Ovary (tissue), 10 donors: ENCODE measurements at regions of chr15 and their contacts with region 1.

Region 1: DNA sequence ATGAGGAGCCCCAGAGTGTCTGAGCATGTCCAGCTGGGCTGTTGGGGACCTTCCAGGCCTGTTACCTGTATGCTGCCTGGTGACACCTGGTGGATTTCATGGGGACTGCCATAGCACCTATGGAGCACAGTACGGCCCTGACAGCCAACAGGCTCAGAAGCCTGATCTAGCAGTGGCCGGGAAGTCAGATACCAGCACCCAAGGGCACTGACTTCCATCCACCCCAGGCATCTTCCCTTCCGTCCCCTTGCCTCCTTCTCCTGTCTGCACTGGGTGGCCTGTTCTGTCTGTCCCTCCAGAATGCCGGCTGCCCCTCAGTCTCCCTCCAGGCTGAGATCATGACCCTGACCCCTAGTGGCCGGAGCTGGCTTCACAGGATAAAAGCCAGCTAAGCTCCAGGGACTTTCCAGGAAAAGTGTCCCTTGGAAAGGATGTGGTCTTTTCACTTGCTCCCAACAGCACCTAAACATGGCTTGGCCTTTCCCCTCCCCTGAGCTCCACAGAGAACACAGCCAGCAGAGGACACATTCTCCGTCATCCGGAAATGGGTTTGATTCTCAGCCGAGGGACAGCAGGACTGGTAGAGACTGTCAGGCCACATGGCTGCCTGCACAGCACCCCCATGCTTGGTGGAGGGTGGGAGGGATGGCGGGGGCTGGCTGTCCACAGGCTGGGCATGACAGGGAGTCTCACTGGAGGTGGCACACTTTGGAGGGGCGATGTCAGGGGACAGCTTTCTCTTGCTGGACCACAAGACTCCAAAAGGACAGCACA is 9.5 kb downstream of the RPS17 start:
- DNase-seq: peak; percentile 37 to 66 (median 60)
- H3K4me3 ChIP-seq: no peak overlapping the region
- H3K27ac ChIP-seq: no peak overlapping the region
- H3K4me1 ChIP-seq: no peaks in the 10 kb centered on the region
- H3K27me3 ChIP-seq: no peaks in the 10 kb centered on the region
- CTCF ChIP-seq: peak in 1 of 3 donors; percentile 49
- EP300 ChIP-seq: no peak
- POLR2A ChIP-seq: no peak

Region 2: DNA sequence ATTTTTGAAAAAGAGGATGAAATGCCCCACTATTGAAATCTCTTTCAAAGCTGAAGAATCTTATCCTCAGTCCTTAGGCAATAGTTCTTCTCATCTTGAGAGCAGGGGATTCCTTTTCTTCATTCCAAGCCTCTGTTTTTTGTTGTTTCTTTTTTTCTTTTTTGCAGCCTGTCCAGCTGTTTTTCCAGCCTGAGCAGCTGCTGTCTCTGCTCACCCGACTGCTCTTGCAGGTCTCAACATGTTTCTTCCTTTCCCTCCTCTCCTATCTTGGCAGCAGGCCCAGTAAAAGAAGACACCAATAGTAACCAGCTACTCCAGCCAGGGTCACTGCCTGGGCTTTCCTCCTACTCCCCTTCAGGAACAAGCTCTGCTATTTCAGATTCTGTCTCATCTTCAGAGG is 508.8 kb before region 1 on chr15:
- intact Hi-C with region 1: no loop called
- DNase-seq: peak; percentile 57 to 67 (median 64)
- H3K4me3 ChIP-seq: no peak overlapping the region
- H3K27ac ChIP-seq: no peak overlapping the region
- H3K4me1 ChIP-seq: peaks cover 8% of the 10 kb centered on the region
- H3K27me3 ChIP-seq: no peaks in the 10 kb centered on the region
- CTCF ChIP-seq: no peak
- EP300 ChIP-seq: no peak
- POLR2A ChIP-seq: no peak

Region 3: GRCh38 chr15:82587805-82588204 is 57.0 kb after region 1 on chr15:
- intact Hi-C with region 1: no loop called
- DNase-seq: no peak
- H3K4me3 ChIP-seq: no peak overlapping the region
- H3K27ac ChIP-seq: no peak overlapping the region
- H3K4me1 ChIP-seq: no peaks in the 10 kb centered on the region
- H3K27me3 ChIP-seq: no peaks in the 10 kb centered on the region
- CTCF ChIP-seq: no peak
- EP300 ChIP-seq: no peak
- POLR2A ChIP-seq: no peak

Region 4: GRCh38 chr15:82771789-82772607 is 241.2 kb after region 1 on chr15:
- intact Hi-C with region 1: no loop called
- DNase-seq: no peak
- H3K4me3 ChIP-seq: no peak overlapping the region
- H3K27ac ChIP-seq: no peak overlapping the region
- H3K4me1 ChIP-seq: no peaks in the 10 kb centered on the region
- H3K27me3 ChIP-seq: no peaks in the 10 kb centered on the region
- CTCF ChIP-seq: no peak
- EP300 ChIP-seq: no peak
- POLR2A ChIP-seq: no peak

Region 5: GRCh38 chr15:82809404-82810060 is 278.7 kb after region 1 on chr15 and contains the start of gene WHAMM:
- intact Hi-C with region 1: loop called in 1 of 4 experiments (anchors 10 kb)
- DNase-seq: peak; percentile 98 to 99 (median 98)
- H3K4me3 ChIP-seq: peak within 1 kb of the TSS; percentile 82
- H3K27ac ChIP-seq: peak within 1 kb of the TSS; percentile 97 to 98
- H3K4me1 ChIP-seq: peaks cover 3% of the 10 kb centered on the region
- H3K27me3 ChIP-seq: no peaks in the 10 kb centered on the region
- CTCF ChIP-seq: peak in 1 of 3 donors; percentile 28
- EP300 ChIP-seq: no peak
- POLR2A ChIP-seq: peak; percentile 95
- total RNA-seq, gene WHAMM: 7.6 to 12.5 (median 8.5) TPM

Region 6: DNA sequence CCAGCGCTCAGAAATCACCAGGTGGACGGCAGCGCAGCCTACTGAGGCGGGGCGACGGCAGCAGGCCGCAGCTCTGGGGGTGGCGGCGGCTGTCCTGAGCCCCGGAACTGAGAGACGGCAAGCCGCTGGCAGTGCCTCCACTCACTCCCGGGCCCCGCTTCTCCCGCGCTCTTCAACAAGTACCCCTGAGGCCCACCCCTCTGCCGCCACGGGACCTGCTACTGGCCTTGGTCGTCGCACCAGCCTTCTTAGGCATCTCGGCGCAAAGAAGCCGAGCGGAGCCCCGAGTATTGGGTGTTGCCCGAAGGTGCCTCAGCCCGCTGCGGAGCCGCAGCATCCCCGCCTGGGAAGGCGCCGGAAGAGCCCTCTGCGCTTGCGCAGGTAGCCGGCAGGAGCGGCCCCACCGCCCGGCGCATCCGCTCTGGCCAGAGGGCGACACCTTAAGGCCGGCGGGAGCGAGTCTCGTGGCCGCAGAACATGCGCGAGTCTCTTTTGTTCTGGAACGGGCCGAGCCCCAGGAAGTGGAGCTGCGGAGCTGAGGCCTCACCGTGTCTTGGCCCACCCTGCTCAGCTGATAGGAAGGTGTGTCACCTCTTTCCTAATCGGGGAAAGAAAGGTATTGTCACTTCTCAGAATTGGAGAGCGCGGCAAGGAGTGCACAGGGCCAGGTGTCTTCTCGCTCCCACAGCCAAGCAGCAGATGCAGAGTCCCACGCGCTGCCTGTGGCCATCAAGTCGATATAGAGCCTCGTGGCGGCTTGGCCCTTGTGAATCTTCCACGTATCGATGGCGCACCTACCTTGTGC is 480.7 kb after region 1 on chr15 and contains the start of gene C15orf40:
- intact Hi-C with region 1: loop called in 1 of 4 experiments (anchors 10 kb)
- DNase-seq: peak; percentile 85 to 92 (median 89)
- H3K4me3 ChIP-seq: peak within 1 kb of the TSS; percentile 99
- H3K27ac ChIP-seq: peak within 1 kb of the TSS; percentile 28 to 71
- H3K4me1 ChIP-seq: peaks cover 11% of the 10 kb centered on the region
- H3K27me3 ChIP-seq: no peaks in the 10 kb centered on the region
- CTCF ChIP-seq: peak; percentile 32 to 71 (median 68)
- EP300 ChIP-seq: no peak
- POLR2A ChIP-seq: peak; percentile 67
- total RNA-seq, gene C15orf40: 15.0 to 27.4 (median 18.0) TPM